ENCODE measurements at regions of chr17 and their contacts with region 1.

Region 1: GRCh38 chr17:40622509-40622928 is 25.1 kb downstream of the SMARCE1 start:
- DNase-seq: no peak
- ATAC-seq: peak; percentile 29; the same call in 2 of the 3 replicates
- H3K4me3 ChIP-seq: no peak overlapping the region
- H3K27ac ChIP-seq: no peak overlapping the region
- H3K4me1 ChIP-seq: peaks cover 27% of the 10 kb centered on the region
- H3K27me3 ChIP-seq: no peaks in the 10 kb centered on the region
- CTCF ChIP-seq: no peak
- EP300 ChIP-seq: no peak
- POLR2A ChIP-seq: no peak
- RAD21 ChIP-seq: no peak

Region 2: GRCh38 chr17:40559954-40560591 is 62.4 kb before region 1 on chr17:
- CTCF ChIA-PET with region 1: interaction called, 164 read pairs
- POLR2A ChIA-PET with region 1: interaction called, 39 read pairs
- RAD21 ChIA-PET with region 1: interaction called, 87 read pairs
- SMC1A ChIA-PET with region 1: interaction called, 123 read pairs
- in situ Hi-C with region 1: no loop called
- intact Hi-C with region 1: no loop called
- DNase-seq: peak; percentile 72
- ATAC-seq: peak; percentile 5
- H3K4me3 ChIP-seq: peak overlapping the region; percentile 70
- H3K27ac ChIP-seq: peak overlapping the region; percentile 98
- H3K4me1 ChIP-seq: peaks cover 33% of the 10 kb centered on the region
- H3K27me3 ChIP-seq: no peaks in the 10 kb centered on the region
- CTCF ChIP-seq: peak; percentile 91 to 97 (median 94)
- EP300 ChIP-seq: no peak
- POLR2A ChIP-seq: no peak; the same call in 1 of the 2 replicates
- RAD21 ChIP-seq: peak; percentile 90

Region 3: GRCh38 chr17:40647624-40648383 is 25.3 kb after region 1 on chr17 and contains the start of gene SMARCE1:
- CTCF ChIA-PET with region 1: interaction called, 36 read pairs
- POLR2A ChIA-PET with region 1: interaction called, 16 read pairs
- RAD21 ChIA-PET with region 1: interaction called, 37 read pairs
- SMC1A ChIA-PET with region 1: interaction called, 15 read pairs
- in situ Hi-C with region 1: no loop called
- intact Hi-C with region 1: no loop called
- DNase-seq: no peak
- ATAC-seq: peak; percentile 85
- H3K4me3 ChIP-seq: peak within 1 kb of the TSS; percentile 89
- H3K27ac ChIP-seq: peak within 1 kb of the TSS; percentile 98
- H3K4me1 ChIP-seq: no peaks in the 10 kb centered on the region
- H3K27me3 ChIP-seq: no peaks in the 10 kb centered on the region
- CTCF ChIP-seq: no peak
- EP300 ChIP-seq: peak in 1 of 2 experiments; percentile 99; a peak in 2 of 4 replicates
- POLR2A ChIP-seq: peak; percentile 89
- RAD21 ChIP-seq: no peak
- polyA plus RNA-seq, gene SMARCE1: 124 to 145 TPM

Region 4: GRCh38 chr17:40726919-40727318 is 104.4 kb after region 1 on chr17:
- CTCF ChIA-PET with region 1: interaction called, 14 read pairs
- POLR2A ChIA-PET with region 1: interaction called, 4 read pairs
- RAD21 ChIA-PET with region 1: interaction called, 12 read pairs
- SMC1A ChIA-PET with region 1: interaction called, 10 read pairs
- in situ Hi-C with region 1: no loop called
- intact Hi-C with region 1: loop called (anchors 5 kb)
- DNase-seq: no peak
- ATAC-seq: peak; percentile 49
- H3K4me3 ChIP-seq: no peak overlapping the region
- H3K27ac ChIP-seq: no peak overlapping the region
- H3K4me1 ChIP-seq: peaks cover 3% of the 10 kb centered on the region; the same call in 1 of the 2 replicates
- H3K27me3 ChIP-seq: no peaks in the 10 kb centered on the region; a peak in 1 of 4 replicates
- CTCF ChIP-seq: peak in 1 of 3 experiments; percentile 22; a peak in 2 of 6 replicates
- EP300 ChIP-seq: no peak
- POLR2A ChIP-seq: no peak
- RAD21 ChIP-seq: no peak

Region 5: GRCh38 chr17:40803617-40804082 is 181.1 kb after region 1 on chr17:
- CTCF ChIA-PET with region 1: interaction called, 14 read pairs
- POLR2A ChIA-PET with region 1: no interaction called
- RAD21 ChIA-PET with region 1: interaction called, 4 read pairs
- SMC1A ChIA-PET with region 1: interaction called, 8 read pairs
- in situ Hi-C with region 1: loop called (anchors 5 kb)
- intact Hi-C with region 1: no loop called
- DNase-seq: no peak
- ATAC-seq: peak; percentile 97
- H3K4me3 ChIP-seq: no peak overlapping the region
- H3K27ac ChIP-seq: no peak overlapping the region
- H3K4me1 ChIP-seq: no peaks in the 10 kb centered on the region
- H3K27me3 ChIP-seq: peaks cover 7 to 10% of the 10 kb centered on the region in 2 experiments
- CTCF ChIP-seq: peak; percentile 84 to 90 (median 86)
- EP300 ChIP-seq: no peak
- POLR2A ChIP-seq: no peak
- RAD21 ChIP-seq: peak; percentile 91

Region 6: GRCh38 chr17:41322094-41322902 is 699.8 kb after region 1 on chr17:
- CTCF ChIA-PET with region 1: interaction called, 3 read pairs
- POLR2A ChIA-PET with region 1: no interaction called
- RAD21 ChIA-PET with region 1: no interaction called
- SMC1A ChIA-PET with region 1: no interaction called
- in situ Hi-C with region 1: no loop called
- intact Hi-C with region 1: loop called (anchors 10 kb)
- DNase-seq: no peak
- ATAC-seq: peak; percentile 76
- H3K4me3 ChIP-seq: no peak overlapping the region
- H3K27ac ChIP-seq: no peak overlapping the region
- H3K4me1 ChIP-seq: no peaks in the 10 kb centered on the region
- H3K27me3 ChIP-seq: no peaks in the 10 kb centered on the region
- CTCF ChIP-seq: peak; percentile 64 to 80 (median 74)
- EP300 ChIP-seq: no peak
- POLR2A ChIP-seq: no peak
- RAD21 ChIP-seq: peak; percentile 70

Measured in GM12878 (cell line).